GM12878 (cell line): ENCODE measurements at regions of chr14 and their contacts with region 1.

Region 1: DNA sequence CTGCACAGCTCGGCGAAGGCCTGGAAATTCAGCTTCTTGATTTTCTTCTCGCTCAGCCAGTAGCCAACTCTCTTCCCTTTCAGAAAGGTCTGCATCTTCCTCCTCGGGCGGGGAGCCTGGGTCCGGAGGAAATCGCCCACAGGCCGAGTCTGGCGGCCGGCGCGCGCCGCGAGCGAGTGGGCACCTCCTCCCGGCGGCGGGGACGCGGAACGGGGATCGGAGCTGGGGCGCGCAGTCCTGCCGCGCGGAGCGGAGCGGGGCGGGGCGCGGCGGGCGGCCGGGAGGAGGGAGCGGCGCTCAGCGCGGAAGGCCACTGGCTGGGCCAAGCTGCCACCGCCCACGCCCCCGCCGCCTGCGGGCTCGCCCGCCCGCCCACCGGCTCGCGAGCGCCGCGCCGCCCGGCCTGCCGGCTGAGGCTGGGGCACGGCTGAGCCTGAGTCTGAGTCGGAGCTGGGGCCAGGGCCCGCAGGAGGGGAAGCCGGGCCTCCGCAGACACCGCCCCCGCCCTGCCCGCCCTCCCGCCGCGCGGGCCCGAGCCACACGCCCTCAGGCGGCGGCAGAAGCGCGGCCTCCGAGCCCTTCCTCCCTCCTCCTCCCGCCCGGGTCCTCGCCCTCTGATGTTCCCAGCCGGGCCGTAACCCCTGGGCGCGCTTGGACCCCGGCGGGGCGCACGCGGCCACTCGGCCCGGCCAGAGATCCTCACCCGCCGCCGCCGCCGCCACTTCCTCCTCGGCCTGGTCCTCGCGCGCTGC is 480 bp downstream of the ITPK1 start:
- DNase-seq: peak; percentile 33
- ATAC-seq: peak; percentile 79
- H3K4me3 ChIP-seq: peak overlapping the region; percentile 99
- H3K27ac ChIP-seq: peak overlapping the region; percentile 38
- H3K4me1 ChIP-seq: peaks cover 13% of the 10 kb centered on the region
- H3K27me3 ChIP-seq: no peaks in the 10 kb centered on the region
- CTCF ChIP-seq: peak in 1 of 3 experiments; percentile 1; a peak in 1 of 6 replicates
- EP300 ChIP-seq: no peak
- POLR2A ChIP-seq: peak; percentile 66; the same call in 1 of the 2 replicates
- RAD21 ChIP-seq: no peak

Region 2: GRCh38 chr14:92456215-92457015 is 658.8 kb before region 1 on chr14:
- CTCF ChIA-PET with region 1: no interaction called
- POLR2A ChIA-PET with region 1: no interaction called
- RAD21 ChIA-PET with region 1: no interaction called
- SMC1A ChIA-PET with region 1: no interaction called
- in situ Hi-C with region 1: no loop called
- intact Hi-C with region 1: no loop called
- DNase-seq: no peak
- ATAC-seq: peak; percentile 84
- H3K4me3 ChIP-seq: no peak overlapping the region
- H3K27ac ChIP-seq: no peak overlapping the region
- H3K4me1 ChIP-seq: peaks cover 9% of the 10 kb centered on the region
- H3K27me3 ChIP-seq: no peaks in the 10 kb centered on the region
- CTCF ChIP-seq: peak; percentile 75 to 89 (median 76)
- EP300 ChIP-seq: no peak
- POLR2A ChIP-seq: no peak
- RAD21 ChIP-seq: peak; percentile 75

Region 3: DNA sequence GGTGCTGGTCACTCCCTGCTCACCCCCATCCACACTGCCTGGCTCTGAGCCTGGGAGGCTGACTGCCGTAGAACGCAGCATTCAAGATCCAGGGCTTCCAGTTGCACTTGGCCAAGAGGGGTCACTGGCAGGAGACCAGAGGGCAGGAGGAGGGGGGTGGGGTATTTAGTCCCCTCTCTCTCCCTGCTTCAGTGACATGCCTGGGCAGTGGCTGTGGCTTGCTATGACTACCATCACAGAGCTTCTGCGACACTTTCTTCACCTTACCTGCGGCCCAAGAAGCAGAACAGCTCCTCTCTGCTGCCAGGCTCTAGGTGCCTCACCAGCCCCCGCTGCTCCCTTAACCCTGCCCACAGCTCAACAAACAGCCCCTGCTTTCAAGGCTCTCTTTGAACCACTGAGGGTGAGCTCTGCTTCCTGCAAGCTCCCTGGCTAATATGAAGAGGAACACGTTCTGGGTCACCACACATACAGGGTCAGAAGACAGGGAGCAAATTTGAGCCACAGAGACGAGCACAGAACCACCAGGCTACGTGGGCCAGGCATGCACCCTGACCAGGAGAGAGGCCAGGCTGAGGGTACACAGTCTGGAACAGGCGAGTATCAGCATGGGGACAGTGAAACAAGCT is 55.2 kb before region 1 on chr14:
- CTCF ChIA-PET with region 1: interaction called, 43 read pairs
- POLR2A ChIA-PET with region 1: interaction called, 14 read pairs
- RAD21 ChIA-PET with region 1: interaction called, 41 read pairs
- SMC1A ChIA-PET with region 1: interaction called, 31 read pairs
- in situ Hi-C with region 1: no loop called
- intact Hi-C with region 1: no loop called
- DNase-seq: no peak
- ATAC-seq: peak; percentile 76
- H3K4me3 ChIP-seq: no peak overlapping the region
- H3K27ac ChIP-seq: peak overlapping the region; percentile 78
- H3K4me1 ChIP-seq: peaks cover 46% of the 10 kb centered on the region
- H3K27me3 ChIP-seq: no peaks in the 10 kb centered on the region
- CTCF ChIP-seq: no peak
- EP300 ChIP-seq: no peak
- POLR2A ChIP-seq: no peak; the same call in 1 of the 2 replicates
- RAD21 ChIP-seq: no peak

Region 4: GRCh38 chr14:93103392-93104080 is 11.7 kb before region 1 on chr14:
- CTCF ChIA-PET with region 1: interaction called, 53 read pairs
- POLR2A ChIA-PET with region 1: interaction called, 4 read pairs
- RAD21 ChIA-PET with region 1: interaction called, 21 read pairs
- SMC1A ChIA-PET with region 1: interaction called, 18 read pairs
- in situ Hi-C with region 1: no loop called
- intact Hi-C with region 1: no loop called
- DNase-seq: peak; percentile 72
- ATAC-seq: peak; percentile 98
- H3K4me3 ChIP-seq: peak overlapping the region; percentile 46
- H3K27ac ChIP-seq: peak overlapping the region; percentile 78
- H3K4me1 ChIP-seq: peaks cover 32% of the 10 kb centered on the region
- H3K27me3 ChIP-seq: no peaks in the 10 kb centered on the region
- CTCF ChIP-seq: no peak
- EP300 ChIP-seq: no peak
- POLR2A ChIP-seq: peak; percentile 48
- RAD21 ChIP-seq: no peak

Region 5: DNA sequence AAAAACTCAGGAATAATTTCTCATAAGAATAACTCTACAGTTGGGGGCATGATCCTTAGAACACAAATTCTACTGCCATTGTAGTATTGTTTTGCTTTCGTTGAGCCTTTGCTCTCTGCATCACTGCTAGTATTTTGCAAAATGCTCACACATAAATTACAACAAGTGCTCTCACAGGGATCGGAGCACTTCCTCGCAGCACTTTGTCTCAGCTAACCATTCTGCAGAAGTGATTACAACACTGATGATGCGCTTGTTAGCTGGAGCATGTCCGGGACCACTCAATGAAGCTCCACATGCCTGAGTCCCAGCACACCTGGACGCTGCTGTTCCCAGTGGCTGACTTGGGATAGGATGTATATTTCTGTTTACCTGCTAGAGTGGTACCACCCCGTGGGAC is 37.9 kb after region 1 on chr14:
- CTCF ChIA-PET with region 1: interaction called, 14 read pairs
- POLR2A ChIA-PET with region 1: no interaction called
- RAD21 ChIA-PET with region 1: interaction called, 4 read pairs
- SMC1A ChIA-PET with region 1: interaction called, 4 read pairs
- in situ Hi-C with region 1: no loop called
- intact Hi-C with region 1: no loop called
- DNase-seq: no peak
- ATAC-seq: no peak
- H3K4me3 ChIP-seq: no peak overlapping the region
- H3K27ac ChIP-seq: no peak overlapping the region
- H3K4me1 ChIP-seq: peaks cover 4% of the 10 kb centered on the region; the same call in 1 of the 2 replicates
- H3K27me3 ChIP-seq: no peaks in the 10 kb centered on the region
- CTCF ChIP-seq: no peak
- EP300 ChIP-seq: no peak
- POLR2A ChIP-seq: no peak
- RAD21 ChIP-seq: no peak

Region 6: DNA sequence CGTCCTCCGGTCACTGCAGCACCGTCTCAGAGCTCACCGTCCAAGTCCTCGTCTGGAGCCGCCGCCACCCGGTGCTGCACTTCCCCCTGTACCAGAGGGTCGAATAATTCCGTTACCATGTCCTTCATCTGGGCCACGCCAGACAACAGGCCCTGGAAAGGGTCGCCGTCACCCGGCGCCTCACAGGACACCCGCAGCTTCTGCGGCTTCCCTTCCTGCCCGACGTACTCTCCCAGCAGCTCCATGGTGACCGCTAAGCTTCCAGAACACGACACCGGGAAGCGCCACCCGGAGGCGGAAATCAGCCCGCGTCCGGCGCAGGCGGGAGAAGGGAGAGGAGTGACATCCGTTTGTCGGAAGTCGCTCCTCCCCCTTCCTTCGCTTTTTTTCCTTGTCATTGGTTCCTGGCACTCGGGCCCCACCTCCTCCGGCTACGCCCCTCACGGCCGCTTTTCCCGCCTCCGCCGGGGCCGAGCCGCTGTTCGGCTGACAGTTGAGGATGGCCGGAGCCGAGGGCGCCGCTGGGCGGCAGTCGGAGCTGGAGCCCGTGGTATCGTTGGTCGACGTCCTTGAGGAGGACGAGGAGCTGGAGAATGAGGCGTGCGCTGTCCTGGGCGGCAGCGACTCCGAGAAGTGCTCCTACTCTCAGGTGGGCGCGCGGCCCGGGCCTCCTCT is 91.7 kb after region 1 on chr14 and contains the starts of genes GON7 and UBR7:
- CTCF ChIA-PET with region 1: interaction called, 48 read pairs
- POLR2A ChIA-PET with region 1: interaction called, 6 read pairs
- RAD21 ChIA-PET with region 1: interaction called, 55 read pairs
- SMC1A ChIA-PET with region 1: interaction called, 26 read pairs
- in situ Hi-C with region 1: no loop called
- intact Hi-C with region 1: loop called (anchors 5 kb)
- DNase-seq: peak; percentile 86
- ATAC-seq: peak; percentile 89
- H3K4me3 ChIP-seq: peak within 1 kb of the TSS; percentile 76
- H3K27ac ChIP-seq: peak within 1 kb of the TSS; percentile 86
- H3K4me1 ChIP-seq: peaks cover 15% of the 10 kb centered on the region
- H3K27me3 ChIP-seq: no peaks in the 10 kb centered on the region
- CTCF ChIP-seq: peak in 2 of 3 experiments; percentile 16 to 20; a peak in 2 of 6 replicates
- EP300 ChIP-seq: 0 out of 4 replicates have a peak, but pooled peaks of 1 of the 2 experiments have one; percentile 21
- POLR2A ChIP-seq: peak; percentile 92
- RAD21 ChIP-seq: 0 out of 2 replicates have a peak, but pooled peaks have one; percentile 13
- polyA plus RNA-seq, gene GON7: 25.9 to 31.2 TPM
- polyA plus RNA-seq, gene UBR7: 14.3 to 20.8 TPM

Region 7: GRCh38 chr14:93262437-93262836 is 147.2 kb after region 1 on chr14:
- CTCF ChIA-PET with region 1: no interaction called
- POLR2A ChIA-PET with region 1: no interaction called
- RAD21 ChIA-PET with region 1: no interaction called
- SMC1A ChIA-PET with region 1: no interaction called
- in situ Hi-C with region 1: no loop called
- intact Hi-C with region 1: no loop called
- DNase-seq: no peak
- ATAC-seq: no peak
- H3K4me3 ChIP-seq: no peak overlapping the region
- H3K27ac ChIP-seq: no peak overlapping the region
- H3K4me1 ChIP-seq: no peaks in the 10 kb centered on the region
- H3K27me3 ChIP-seq: no peaks in the 10 kb centered on the region
- CTCF ChIP-seq: no peak
- EP300 ChIP-seq: no peak
- POLR2A ChIP-seq: no peak
- RAD21 ChIP-seq: no peak